Posterior cingulate gyrus (tissue), 11 donors: ENCODE measurements at regions of chr3 and their contacts with region 1.

Region 1: DNA sequence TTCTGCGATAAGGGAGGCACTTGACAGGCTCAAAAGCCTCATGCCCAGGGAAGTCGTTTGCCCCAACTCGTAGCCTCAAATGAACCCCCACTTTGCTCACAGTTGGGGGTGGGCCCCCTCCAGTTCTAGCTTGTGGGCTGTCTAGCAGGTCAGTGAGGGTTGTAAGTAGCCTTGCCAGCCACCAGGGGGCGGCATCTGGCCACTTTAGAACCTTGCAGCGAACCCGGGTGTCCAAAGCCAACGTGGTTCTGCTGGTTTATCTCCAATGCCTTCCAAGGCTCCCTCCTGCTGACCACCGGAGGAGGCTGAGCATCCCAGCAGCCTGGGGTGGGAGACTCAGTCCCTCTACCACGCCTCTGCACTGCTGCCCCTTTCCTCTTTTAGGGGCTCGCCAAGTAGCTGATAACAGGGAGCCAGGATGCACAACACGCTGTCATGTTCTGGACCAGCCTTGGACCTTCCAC is 9.2 kb upstream of the RBSN start:
- DNase-seq: peak; percentile 62 to 97 (median 80)

Region 2: GRCh38 chr3:15405448-15406050 is 297.4 kb after region 1 on chr3:
- intact Hi-C with region 1: loop called (anchors 5 kb)
- DNase-seq: no peak